ENCODE measurements at regions of chr1 and their contacts with region 1.

Region 1: GRCh38 chr1:204207136-204207616 is 6.6 kb downstream of the GOLT1A start:
- DNase-seq: peak; percentile 93
- ATAC-seq: peak; percentile 98
- H3K4me3 Mint-ChIP-seq: no peak overlapping the region
- H3K27ac Mint-ChIP-seq: no peak overlapping the region
- H3K4me1 Mint-ChIP-seq: no peaks in the 10 kb centered on the region
- H3K27me3 Mint-ChIP-seq: no peaks in the 10 kb centered on the region; the same call in 1 of the 2 replicates
- CTCF ChIP-seq: peak; percentile 94

Region 2: DNA sequence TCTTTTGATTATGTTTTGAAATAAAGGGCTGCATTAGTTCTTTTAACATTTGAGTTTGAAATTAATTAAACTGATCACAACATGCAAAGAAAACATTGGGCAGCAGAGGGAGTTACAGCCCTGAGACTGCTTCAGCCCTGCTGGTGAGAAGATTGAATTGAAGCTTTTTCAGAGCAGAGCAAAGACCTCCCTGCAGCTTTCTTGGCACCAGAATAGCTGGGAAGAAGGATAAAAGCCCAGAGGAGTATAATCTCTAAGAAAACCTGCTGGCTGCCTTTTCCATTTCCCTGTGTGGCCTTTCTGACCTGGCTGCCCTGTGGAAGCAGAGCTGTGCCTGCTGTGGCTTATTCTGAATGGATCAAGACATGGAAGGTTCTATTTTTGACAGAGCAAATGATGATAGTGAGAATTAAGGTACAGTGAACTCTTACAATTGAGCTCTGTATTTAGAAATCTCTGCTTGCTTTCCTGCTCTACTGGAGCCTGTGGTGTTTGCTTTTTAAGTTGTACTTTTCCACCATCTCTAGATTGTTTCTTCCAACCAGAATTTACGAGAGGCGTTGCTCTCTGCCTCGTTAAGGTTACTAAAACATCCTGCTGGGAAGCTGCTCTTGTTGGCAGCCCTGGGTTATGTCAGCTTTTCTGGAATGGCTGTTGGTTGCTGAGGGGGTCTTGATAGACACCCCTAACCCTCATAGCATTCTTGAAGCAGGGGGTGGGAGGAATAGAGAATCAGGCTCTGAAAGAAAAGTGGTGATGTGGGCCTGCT is 335.9 kb before region 1 on chr1:
- CTCF ChIA-PET with region 1: interaction called, 18 read pairs
- POLR2A ChIA-PET with region 1: no interaction called
- DNase-seq: peak; percentile 24
- ATAC-seq: peak; percentile 84
- H3K4me3 Mint-ChIP-seq: no peak overlapping the region
- H3K27ac Mint-ChIP-seq: peak overlapping the region; percentile 70; the same call in 1 of the 2 replicates
- H3K4me1 Mint-ChIP-seq: peaks cover 7% of the 10 kb centered on the region
- H3K27me3 Mint-ChIP-seq: no peaks in the 10 kb centered on the region
- CTCF ChIP-seq: peak; percentile 50; the same call in 1 of the 2 replicates

Region 3: GRCh38 chr1:204162231-204163074 is 44.7 kb before region 1 on chr1:
- CTCF ChIA-PET with region 1: interaction called, 159 read pairs
- POLR2A ChIA-PET with region 1: no interaction called
- DNase-seq: peak; percentile 94
- ATAC-seq: peak; percentile 98
- H3K4me3 Mint-ChIP-seq: no peak overlapping the region
- H3K27ac Mint-ChIP-seq: no peak overlapping the region
- H3K4me1 Mint-ChIP-seq: peaks cover 2% of the 10 kb centered on the region; the same call in 1 of the 2 replicates
- H3K27me3 Mint-ChIP-seq: peaks cover 8% of the 10 kb centered on the region
- CTCF ChIP-seq: peak; percentile 99

Region 4: GRCh38 chr1:204225841-204226735 is 18.9 kb after region 1 on chr1:
- CTCF ChIA-PET with region 1: interaction called, 11 read pairs
- POLR2A ChIA-PET with region 1: interaction called, 3 read pairs
- DNase-seq: no peak
- ATAC-seq: peak; percentile 57
- H3K4me3 Mint-ChIP-seq: no peak overlapping the region
- H3K27ac Mint-ChIP-seq: peak overlapping the region; percentile 24; the same call in 1 of the 2 replicates
- H3K4me1 Mint-ChIP-seq: peaks cover 7% of the 10 kb centered on the region
- H3K27me3 Mint-ChIP-seq: no peaks in the 10 kb centered on the region
- CTCF ChIP-seq: no peak

Region 5: DNA sequence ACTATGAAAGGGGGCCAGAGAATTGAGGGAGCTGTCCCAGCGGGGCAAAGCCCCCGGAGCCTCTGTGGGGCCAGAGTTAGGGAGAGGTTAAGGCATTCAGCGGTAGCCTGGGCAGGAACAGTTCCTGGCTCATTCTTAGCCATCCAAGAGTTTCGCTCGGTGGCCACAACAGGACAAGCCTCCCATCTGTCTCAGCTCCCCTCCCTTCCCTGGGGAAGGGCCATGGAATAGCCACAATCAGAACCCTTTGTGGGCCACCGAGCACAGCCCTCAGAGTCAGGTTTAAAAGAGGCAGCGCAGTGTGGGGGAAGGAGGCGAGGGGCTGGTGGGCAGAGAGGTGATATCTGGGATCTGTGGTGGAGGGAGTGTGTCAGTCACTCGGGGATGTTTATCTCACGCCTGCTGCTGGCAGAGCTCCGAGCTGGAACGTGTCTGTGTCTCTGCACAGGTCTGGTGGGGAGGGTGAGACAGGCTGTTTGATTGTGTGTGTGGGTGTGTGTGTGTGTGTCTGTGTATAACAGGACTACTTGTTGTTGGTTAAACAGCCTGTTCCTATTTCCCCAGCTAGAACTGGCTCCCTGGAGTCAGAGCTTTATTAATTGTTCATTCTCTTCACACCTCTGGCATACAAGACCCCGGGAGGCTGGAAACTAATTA is 56.2 kb after region 1 on chr1:
- CTCF ChIA-PET with region 1: interaction called, 12 read pairs
- POLR2A ChIA-PET with region 1: no interaction called
- DNase-seq: no peak
- ATAC-seq: no peak
- H3K4me3 Mint-ChIP-seq: no peak overlapping the region
- H3K27ac Mint-ChIP-seq: no peak overlapping the region
- H3K4me1 Mint-ChIP-seq: no peaks in the 10 kb centered on the region
- H3K27me3 Mint-ChIP-seq: no peaks in the 10 kb centered on the region
- CTCF ChIP-seq: no peak

Region 6: GRCh38 chr1:204363335-204364124 is 156.4 kb after region 1 on chr1:
- CTCF ChIA-PET with region 1: interaction called, 118 read pairs
- POLR2A ChIA-PET with region 1: no interaction called
- DNase-seq: peak; percentile 73
- ATAC-seq: peak; percentile 43
- H3K4me3 Mint-ChIP-seq: peak overlapping the region; percentile 56
- H3K27ac Mint-ChIP-seq: no peak overlapping the region
- H3K4me1 Mint-ChIP-seq: peaks cover 19% of the 10 kb centered on the region
- H3K27me3 Mint-ChIP-seq: peaks cover 20% of the 10 kb centered on the region
- CTCF ChIP-seq: peak; percentile 98

Measured in WTC11 (cell line).